A673 (cell line): ENCODE measurements at regions of chr11 and their contacts with region 1.

Region 1: DNA sequence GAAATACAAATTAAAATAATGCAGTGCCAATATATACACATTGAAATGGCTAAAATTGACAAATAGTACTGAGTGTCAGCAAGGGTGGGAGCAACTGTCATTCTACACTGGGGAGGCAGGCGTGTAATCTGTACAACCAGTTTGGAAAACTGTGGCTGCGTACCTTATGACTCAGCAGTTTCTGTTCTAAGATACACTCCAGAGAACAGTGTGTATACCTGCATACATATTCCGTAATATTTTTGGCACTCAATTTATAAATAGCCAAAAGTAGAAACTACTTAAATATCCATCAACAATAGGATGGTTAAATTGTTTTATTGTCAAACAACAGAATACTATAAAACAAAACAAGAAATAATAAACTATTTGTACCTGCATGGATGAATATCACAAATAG is 57.6 kb downstream of the RNF169 start:
- DNase-seq: no peak
- H3K4me3 ChIP-seq: no peak overlapping the region
- H3K27ac ChIP-seq: no peak overlapping the region
- H3K4me1 ChIP-seq: no peaks in the 10 kb centered on the region
- H3K27me3 ChIP-seq: no peaks in the 10 kb centered on the region
- CTCF ChIP-seq: no peak

Region 2: GRCh38 chr11:74770456-74770855 is 35.8 kb before region 1 on chr11:
- CTCF ChIA-PET with region 1: no interaction called
- POLR2A ChIA-PET with region 1: no interaction called
- intact Hi-C with region 1: no loop called
- DNase-seq: no peak
- H3K4me3 ChIP-seq: no peak overlapping the region
- H3K27ac ChIP-seq: no peak overlapping the region
- H3K4me1 ChIP-seq: no peaks in the 10 kb centered on the region
- H3K27me3 ChIP-seq: no peaks in the 10 kb centered on the region
- CTCF ChIP-seq: no peak

Region 3: DNA sequence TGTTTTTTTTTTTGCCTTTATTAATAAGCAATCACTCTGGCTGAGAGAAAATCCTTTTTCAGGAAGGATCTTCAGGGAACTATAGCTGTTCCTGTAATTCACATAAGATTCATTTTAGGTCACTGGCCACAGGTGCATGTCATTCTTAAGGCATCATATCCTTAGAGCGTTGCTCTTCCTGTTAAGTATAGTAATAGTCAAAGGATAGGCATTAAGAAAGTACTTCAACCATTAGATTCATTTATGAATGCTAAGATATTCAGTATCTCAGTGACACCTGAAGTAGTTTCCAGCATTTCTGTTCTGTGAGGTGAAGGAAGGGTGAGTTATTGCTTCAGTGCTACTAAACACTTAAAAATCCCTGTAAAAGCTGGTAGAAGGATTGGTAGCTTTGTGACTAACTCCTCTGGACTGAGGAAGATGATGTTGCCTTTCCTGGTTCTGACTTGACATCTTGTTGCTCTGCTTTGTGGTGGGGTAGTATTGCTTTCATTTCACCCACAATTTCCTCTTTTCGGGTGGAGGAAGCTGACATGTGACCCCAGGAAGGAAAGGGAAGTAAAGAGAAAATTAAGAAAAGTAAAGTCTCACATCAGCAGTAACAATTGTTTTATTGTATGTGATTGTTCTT is 22.9 kb before region 1 on chr11:
- CTCF ChIA-PET with region 1: interaction called, 10 read pairs
- POLR2A ChIA-PET with region 1: no interaction called
- intact Hi-C with region 1: no loop called
- DNase-seq: no peak
- H3K4me3 ChIP-seq: no peak overlapping the region
- H3K27ac ChIP-seq: no peak overlapping the region
- H3K4me1 ChIP-seq: no peaks in the 10 kb centered on the region
- H3K27me3 ChIP-seq: no peaks in the 10 kb centered on the region
- CTCF ChIP-seq: no peak

Region 4: DNA sequence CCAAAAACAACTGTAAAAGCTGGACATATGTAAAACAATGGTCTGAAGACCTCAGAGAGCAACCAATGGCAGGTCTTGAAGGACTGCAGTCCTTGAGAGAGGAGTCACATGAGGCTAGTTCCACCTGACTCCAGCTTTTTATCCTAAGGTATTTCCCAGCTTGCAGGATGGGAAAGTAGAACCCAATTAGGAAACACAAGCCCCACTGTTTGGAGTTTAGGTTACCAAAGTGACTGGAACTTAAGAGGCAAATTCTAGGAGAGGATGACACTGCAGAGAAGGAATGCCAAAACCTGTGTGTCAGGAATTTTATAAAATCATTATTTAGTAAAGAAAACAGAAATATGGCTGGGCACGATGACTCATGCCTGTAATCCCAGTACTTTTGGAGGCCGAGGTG is 272.0 kb after region 1 on chr11:
- CTCF ChIA-PET with region 1: no interaction called
- POLR2A ChIA-PET with region 1: no interaction called
- intact Hi-C with region 1: no loop called
- DNase-seq: no peak
- H3K4me3 ChIP-seq: no peak overlapping the region
- H3K27ac ChIP-seq: no peak overlapping the region
- H3K4me1 ChIP-seq: no peaks in the 10 kb centered on the region
- H3K27me3 ChIP-seq: peaks cover 6% of the 10 kb centered on the region
- CTCF ChIP-seq: no peak

Region 5: GRCh38 chr11:75132080-75132479 is 325.8 kb after region 1 on chr11:
- CTCF ChIA-PET with region 1: no interaction called
- POLR2A ChIA-PET with region 1: no interaction called
- intact Hi-C with region 1: no loop called
- DNase-seq: no peak
- H3K4me3 ChIP-seq: no peak overlapping the region
- H3K27ac ChIP-seq: no peak overlapping the region
- H3K4me1 ChIP-seq: no peaks in the 10 kb centered on the region
- H3K27me3 ChIP-seq: peaks cover 7% of the 10 kb centered on the region
- CTCF ChIP-seq: no peak